Endothelial cell of umbilical vein (primary cell): ENCODE measurements at regions of chr15 and their contacts with region 1.

Region 1: GRCh38 chr15:99507504-99508310 is 58.1 kb upstream of the MEF2A start:
- DNase-seq: peak; percentile 82
- H3K4me3 ChIP-seq: no peak overlapping the region
- H3K27ac ChIP-seq: peak overlapping the region; percentile 10
- H3K4me1 ChIP-seq: peaks cover 30% of the 10 kb centered on the region
- H3K27me3 ChIP-seq: no peaks in the 10 kb centered on the region
- CTCF ChIP-seq: no peak
- POLR2A ChIP-seq: no peak

Region 2: GRCh38 chr15:99536422-99537040 is 28.8 kb after region 1 on chr15:
- CTCF ChIA-PET with region 1: interaction called, 3 read pairs
- POLR2A ChIA-PET with region 1: no interaction called
- dilution Hi-C with region 1: no loop called
- intact Hi-C with region 1: loop called (anchors 1 kb)
- DNase-seq: peak; percentile 84
- H3K4me3 ChIP-seq: no peak overlapping the region
- H3K27ac ChIP-seq: peak overlapping the region; percentile 42
- H3K4me1 ChIP-seq: peaks cover 15% of the 10 kb centered on the region
- H3K27me3 ChIP-seq: no peaks in the 10 kb centered on the region
- CTCF ChIP-seq: no peak
- POLR2A ChIP-seq: no peak

Region 3: GRCh38 chr15:99593070-99593469 is 85.4 kb after region 1 on chr15:
- CTCF ChIA-PET with region 1: no interaction called
- POLR2A ChIA-PET with region 1: no interaction called
- dilution Hi-C with region 1: no loop called
- intact Hi-C with region 1: no loop called
- DNase-seq: no peak
- H3K4me3 ChIP-seq: no peak overlapping the region
- H3K27ac ChIP-seq: no peak overlapping the region
- H3K4me1 ChIP-seq: peaks cover 5% of the 10 kb centered on the region
- H3K27me3 ChIP-seq: no peaks in the 10 kb centered on the region
- CTCF ChIP-seq: no peak
- POLR2A ChIP-seq: no peak